ENCODE measurements at regions of chr10 and their contacts with region 1.

Region 1: GRCh38 chr10:49598986-49599385 is 11.1 kb upstream of the SLC18A3 start:
- DNase-seq: no peak
- ATAC-seq: no peak
- H3K4me3 ChIP-seq: no peak overlapping the region
- H3K27ac ChIP-seq: no peak overlapping the region
- H3K4me1 ChIP-seq: no peaks in the 10 kb centered on the region
- H3K27me3 ChIP-seq: no peaks in the 10 kb centered on the region; a peak in 1 of 4 replicates
- CTCF ChIP-seq: no peak
- EP300 ChIP-seq: no peak
- POLR2A ChIP-seq: no peak
- RAD21 ChIP-seq: no peak

Region 2: DNA sequence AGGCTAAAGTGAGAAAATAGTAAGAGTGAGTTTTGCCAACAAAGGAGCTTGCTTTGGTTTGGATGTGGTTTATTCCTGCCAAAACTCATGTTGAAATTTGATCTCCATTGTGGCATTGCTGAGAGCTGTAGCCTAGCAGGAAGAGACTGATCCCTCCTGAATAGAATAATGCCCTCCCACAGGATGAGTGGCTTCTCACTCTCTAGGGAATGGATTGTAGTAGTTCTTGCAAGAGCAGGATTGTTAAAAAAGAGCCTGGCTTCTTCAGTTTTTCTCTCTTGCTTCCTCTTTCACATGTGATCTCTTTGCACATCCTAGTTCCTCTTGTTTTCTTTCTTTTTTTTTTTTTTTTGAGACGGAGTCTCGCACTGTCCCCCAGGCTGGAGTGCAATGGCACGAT is 617.9 kb after region 1 on chr10:
- CTCF ChIA-PET with region 1: interaction called, 61 read pairs
- POLR2A ChIA-PET with region 1: no interaction called
- RAD21 ChIA-PET with region 1: interaction called, 4 read pairs
- SMC1A ChIA-PET with region 1: no interaction called
- in situ Hi-C with region 1: loop called (anchors 5 kb)
- intact Hi-C with region 1: no loop called
- DNase-seq: no peak
- ATAC-seq: peak; percentile 44
- H3K4me3 ChIP-seq: no peak overlapping the region
- H3K27ac ChIP-seq: no peak overlapping the region
- H3K4me1 ChIP-seq: no peaks in the 10 kb centered on the region
- H3K27me3 ChIP-seq: no peaks in the 10 kb centered on the region
- CTCF ChIP-seq: no peak
- EP300 ChIP-seq: no peak
- POLR2A ChIP-seq: no peak
- RAD21 ChIP-seq: no peak

Region 3: DNA sequence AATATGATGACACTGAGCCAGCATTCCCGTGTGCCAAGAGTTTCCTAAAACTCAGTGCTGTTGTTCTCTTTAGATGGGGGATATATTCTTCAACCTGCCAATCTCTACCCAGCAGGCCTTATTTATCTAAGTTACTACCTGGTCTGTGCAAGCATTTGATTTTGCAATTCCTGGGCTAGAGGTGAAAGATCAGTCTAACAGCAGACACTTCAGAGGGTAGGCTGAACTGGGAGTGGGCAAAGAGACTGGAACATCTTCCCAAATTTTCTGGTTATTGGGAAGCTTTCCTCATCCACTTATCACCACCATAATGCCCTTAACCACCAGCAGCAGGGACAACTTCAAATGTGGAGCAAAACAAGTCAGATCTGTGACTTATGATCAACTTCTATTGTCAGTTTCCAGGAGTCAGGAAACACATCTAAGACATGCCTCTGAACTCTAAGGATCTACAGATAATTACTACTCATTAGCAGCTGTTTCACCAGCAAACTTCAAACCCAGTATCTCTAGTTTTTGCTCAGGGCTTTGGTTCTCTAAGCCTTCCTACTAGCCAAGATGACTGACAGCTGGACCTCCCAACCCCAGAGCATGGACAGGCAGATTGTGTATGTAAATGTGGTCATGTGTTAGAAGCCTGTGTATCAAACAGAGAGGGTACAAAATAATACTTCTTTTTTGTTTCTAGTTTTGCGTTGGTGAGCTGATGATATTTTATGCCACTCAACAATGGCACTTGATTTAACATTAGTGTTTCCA is 651.3 kb after region 1 on chr10:
- CTCF ChIA-PET with region 1: no interaction called
- POLR2A ChIA-PET with region 1: no interaction called
- RAD21 ChIA-PET with region 1: no interaction called
- SMC1A ChIA-PET with region 1: no interaction called
- in situ Hi-C with region 1: no loop called
- intact Hi-C with region 1: no loop called
- DNase-seq: no peak
- ATAC-seq: no peak
- H3K4me3 ChIP-seq: no peak overlapping the region
- H3K27ac ChIP-seq: no peak overlapping the region
- H3K4me1 ChIP-seq: no peaks in the 10 kb centered on the region
- H3K27me3 ChIP-seq: peaks cover 0 to 6% of the 10 kb centered on the region in 2 experiments; a peak in 3 of 4 replicates
- CTCF ChIP-seq: no peak
- EP300 ChIP-seq: no peak
- POLR2A ChIP-seq: no peak
- RAD21 ChIP-seq: no peak